ENCODE measurements at regions of chr5 and their contacts with region 1.

Region 1: GRCh38 chr5:157994906-157995519 is 136.1 kb upstream of the CLINT1 start:
- DNase-seq: peak; percentile 61 to 74 (median 70)
- H3K4me3 ChIP-seq: no peak overlapping the region
- H3K27ac ChIP-seq: no peak overlapping the region
- H3K4me1 ChIP-seq: peaks cover 0 to 2% (median 0%) of the 10 kb centered on the region in 4 experiments
- H3K27me3 ChIP-seq: no peaks in the 10 kb centered on the region

Region 2: GRCh38 chr5:157812086-157812485 is 182.9 kb before region 1 on chr5:
- CTCF ChIA-PET with region 1: interaction called, 22 read pairs
- POLR2A ChIA-PET with region 1: no interaction called
- DNase-seq: no peak
- H3K4me3 ChIP-seq: no peak overlapping the region
- H3K27ac ChIP-seq: no peak overlapping the region
- H3K4me1 ChIP-seq: no peaks in the 10 kb centered on the region
- H3K27me3 ChIP-seq: no peaks in the 10 kb centered on the region

Region 3: DNA sequence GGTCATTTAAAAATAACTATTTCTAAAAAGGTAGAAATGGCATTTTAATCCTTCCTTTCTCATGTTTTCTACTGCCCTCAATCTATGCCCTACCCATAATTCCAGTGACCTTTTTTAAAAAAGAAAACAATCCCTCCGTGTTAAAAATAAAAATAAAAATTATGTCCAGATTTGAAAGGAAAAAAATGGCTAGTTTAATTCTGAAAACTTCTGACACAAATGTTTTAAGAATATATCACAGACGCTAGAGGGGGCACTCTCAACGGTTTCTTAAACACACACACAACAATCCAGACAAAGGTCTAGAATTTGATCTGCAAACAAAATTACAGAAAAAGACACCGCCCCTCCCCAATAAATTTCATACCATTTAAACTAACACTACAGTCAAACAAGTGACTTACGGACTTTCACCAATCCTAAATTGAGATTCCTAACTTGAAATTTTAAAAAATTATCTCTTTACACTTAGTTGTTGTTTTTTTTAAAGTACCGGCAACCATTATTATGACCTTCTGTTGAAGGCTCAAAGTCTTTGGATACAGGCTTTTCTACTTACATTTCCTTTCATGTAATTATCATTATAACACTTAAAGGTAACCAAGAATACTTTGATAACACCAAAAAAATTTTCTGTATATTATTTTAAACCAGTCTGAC is 174.3 kb before region 1 on chr5:
- CTCF ChIA-PET with region 1: interaction called, 22 read pairs
- POLR2A ChIA-PET with region 1: no interaction called
- DNase-seq: peak; percentile 72 to 87 (median 87)
- H3K4me3 ChIP-seq: no peak overlapping the region
- H3K27ac ChIP-seq: no peak overlapping the region
- H3K4me1 ChIP-seq: peaks cover 0 to 25% (median 3%) of the 10 kb centered on the region in 4 experiments
- H3K27me3 ChIP-seq: no peaks in the 10 kb centered on the region

Region 4: GRCh38 chr5:158011422-158011821 is 16.4 kb after region 1 on chr5:
- CTCF ChIA-PET with region 1: interaction called, 13 read pairs
- POLR2A ChIA-PET with region 1: no interaction called
- DNase-seq: no peak
- H3K4me3 ChIP-seq: no peak overlapping the region
- H3K27ac ChIP-seq: no peak overlapping the region
- H3K4me1 ChIP-seq: no peaks in the 10 kb centered on the region
- H3K27me3 ChIP-seq: peaks cover 0 to 10% (median 4%) of the 10 kb centered on the region in 5 experiments

Region 5: GRCh38 chr5:158023266-158023665 is 28.3 kb after region 1 on chr5:
- CTCF ChIA-PET with region 1: no interaction called
- POLR2A ChIA-PET with region 1: no interaction called
- DNase-seq: no peak
- H3K4me3 ChIP-seq: no peak overlapping the region
- H3K27ac ChIP-seq: no peak overlapping the region
- H3K4me1 ChIP-seq: peaks cover 0 to 6% (median 3%) of the 10 kb centered on the region in 4 experiments
- H3K27me3 ChIP-seq: peaks cover 0 to 11% (median 5%) of the 10 kb centered on the region in 5 experiments

Region 6: DNA sequence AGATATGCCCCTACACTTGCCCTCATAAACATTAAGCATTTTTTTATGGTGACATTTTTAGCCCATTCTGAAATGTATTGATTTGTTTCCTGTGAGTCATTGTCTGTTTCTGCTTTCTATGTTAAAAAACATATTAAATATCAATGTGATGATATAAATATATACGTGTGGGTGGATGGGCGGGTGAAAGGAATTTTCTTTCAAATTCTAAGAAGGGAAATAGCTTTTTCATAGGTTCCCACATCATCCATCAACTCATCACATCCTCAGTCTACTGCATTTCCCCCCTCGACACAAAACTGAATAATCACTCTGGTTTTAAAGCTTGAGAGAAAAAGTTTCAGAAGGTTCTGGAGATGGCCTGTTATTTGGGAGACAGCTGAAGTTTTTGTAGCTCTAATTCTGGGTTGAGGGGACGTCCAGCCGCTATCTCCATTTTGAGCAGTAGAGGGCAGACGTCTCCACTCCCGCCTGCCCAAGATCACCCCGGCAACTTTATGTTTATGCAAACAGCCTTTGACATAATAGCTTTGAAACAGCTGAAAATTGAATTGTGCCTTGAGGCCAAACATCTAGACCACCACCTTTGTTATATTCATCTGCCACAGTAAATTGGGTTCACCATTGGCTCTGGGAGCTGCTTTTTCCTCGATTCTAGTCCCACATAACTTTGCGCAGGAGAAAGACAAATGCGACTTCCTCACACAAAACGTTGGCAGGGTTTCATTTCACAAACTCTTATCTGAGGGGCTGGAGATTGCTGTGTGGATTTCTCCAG is 80.2 kb after region 1 on chr5:
- CTCF ChIA-PET with region 1: no interaction called
- POLR2A ChIA-PET with region 1: no interaction called
- DNase-seq: peak; percentile 71 to 87 (median 86)
- H3K4me3 ChIP-seq: peak overlapping the region in 4 of 7 experiments; percentile 27 to 63 (median 46)
- H3K27ac ChIP-seq: peak overlapping the region in 1 of 2 experiments; percentile 37
- H3K4me1 ChIP-seq: peaks cover 0 to 3% (median under 1%) of the 10 kb centered on the region in 4 experiments
- H3K27me3 ChIP-seq: peaks cover 0 to 2% (median 0%) of the 10 kb centered on the region in 5 experiments

Measured in common myeloid progenitor, CD34-positive (primary cell).